Gastrocnemius medialis (tissue), 4 donors: ENCODE measurements at regions of chr4 and their contacts with region 1.

Region 1: GRCh38 chr4:168585168-168586091 is 88.6 kb downstream of the PALLD start:
- DNase-seq: peak; percentile 49 to 83
- ATAC-seq: peak; percentile 87 to 93
- H3K4me3 ChIP-seq: no peak overlapping the region
- H3K27ac ChIP-seq: peak overlapping the region in 1 of 4 donors; percentile 44
- H3K4me1 ChIP-seq: peaks cover 20 to 21% of the 10 kb centered on the region in 2 donors
- H3K27me3 ChIP-seq: no peaks in the 10 kb centered on the region
- CTCF ChIP-seq: peak; percentile 61 to 79 (median 71)
- POLR2A ChIP-seq: no peak

Region 2: GRCh38 chr4:168631241-168632162 is 46.1 kb after region 1 on chr4:
- in situ Hi-C with region 1: no loop called
- intact Hi-C with region 1: loop called (anchors 2 kb)
- DNase-seq: peak; percentile 34 to 69
- ATAC-seq: peak; percentile 75 to 77
- H3K4me3 ChIP-seq: peak overlapping the region; percentile 78 to 86 (median 79)
- H3K27ac ChIP-seq: peak overlapping the region; percentile 77 to 89 (median 82)
- H3K4me1 ChIP-seq: peaks cover 31 to 49% of the 10 kb centered on the region in 2 donors
- H3K27me3 ChIP-seq: no peaks in the 10 kb centered on the region
- CTCF ChIP-seq: peak; percentile 40 to 67 (median 52)
- POLR2A ChIP-seq: peak in 1 of 2 donors; percentile 9

Region 3: GRCh38 chr4:168679397-168680192 is 94.2 kb after region 1 on chr4:
- in situ Hi-C with region 1: no loop called
- intact Hi-C with region 1: no loop called
- DNase-seq: no peak
- ATAC-seq: no peak
- H3K4me3 ChIP-seq: no peak overlapping the region
- H3K27ac ChIP-seq: peak overlapping the region in 3 of 4 donors; percentile 9 to 22 (median 21)
- H3K4me1 ChIP-seq: no peaks in the 10 kb centered on the region
- H3K27me3 ChIP-seq: no peaks in the 10 kb centered on the region
- CTCF ChIP-seq: no peak
- POLR2A ChIP-seq: no peak

Region 4: GRCh38 chr4:168710353-168710946 is 125.0 kb after region 1 on chr4:
- in situ Hi-C with region 1: loop called in 1 of 4 experiments (anchors 10 kb)
- intact Hi-C with region 1: no loop called
- DNase-seq: peak; percentile 17 to 43
- ATAC-seq: peak; percentile 66 to 74
- H3K4me3 ChIP-seq: no peak overlapping the region
- H3K27ac ChIP-seq: peak overlapping the region; percentile 29 to 72 (median 58)
- H3K4me1 ChIP-seq: peaks cover 24 to 26% of the 10 kb centered on the region in 2 donors
- H3K27me3 ChIP-seq: no peaks in the 10 kb centered on the region
- CTCF ChIP-seq: peak; percentile 48 to 75 (median 66)
- POLR2A ChIP-seq: no peak

Region 5: DNA sequence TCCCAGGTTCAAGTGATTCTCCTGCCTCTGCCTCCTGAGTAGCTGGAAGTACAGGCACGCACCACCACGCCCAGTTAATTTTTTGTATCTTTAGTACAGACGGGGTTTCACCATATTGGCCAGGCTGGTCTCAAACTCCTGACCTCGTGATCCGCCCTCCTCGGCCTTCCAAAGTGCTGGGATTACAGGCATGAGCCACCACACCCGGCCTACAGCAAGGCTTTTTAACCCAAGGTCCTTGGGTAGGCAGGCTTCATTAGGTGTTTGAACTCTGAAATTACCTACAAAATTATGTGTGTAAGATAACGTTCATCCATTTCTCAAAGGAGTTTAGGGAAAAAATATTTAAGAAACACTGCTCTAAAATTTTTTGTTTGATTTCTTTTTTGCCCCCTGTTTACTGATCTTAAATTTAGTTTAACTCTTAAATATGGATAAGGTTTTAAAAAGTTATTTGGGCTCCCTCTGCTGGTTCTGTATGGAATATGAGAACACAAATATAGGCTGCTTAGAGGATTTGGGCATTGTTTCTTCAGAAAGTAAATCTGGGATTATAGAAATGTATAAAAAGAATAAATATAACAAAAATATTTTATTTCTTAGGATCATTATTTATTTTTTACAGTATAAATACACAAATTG is 331.8 kb after region 1 on chr4:
- in situ Hi-C with region 1: loop called (anchors 5 to 25 kb)
- intact Hi-C with region 1: loop called (anchors 1 kb)
- DNase-seq: no peak
- ATAC-seq: peak in 1 of 2 donors; percentile 31
- H3K4me3 ChIP-seq: no peak overlapping the region
- H3K27ac ChIP-seq: peak overlapping the region in 3 of 4 donors; percentile 28 to 49 (median 47)
- H3K4me1 ChIP-seq: peaks cover 0 to 6% of the 10 kb centered on the region in 2 donors
- H3K27me3 ChIP-seq: no peaks in the 10 kb centered on the region
- CTCF ChIP-seq: peak; percentile 48 to 82 (median 64)
- POLR2A ChIP-seq: no peak

Region 6: GRCh38 chr4:168923526-168924194 is 338.2 kb after region 1 on chr4:
- in situ Hi-C with region 1: loop called (anchors 5 to 25 kb)
- intact Hi-C with region 1: loop called (anchors 1 kb)
- DNase-seq: peak in 1 of 2 donors; percentile 25
- ATAC-seq: peak; percentile 45 to 78
- H3K4me3 ChIP-seq: no peak overlapping the region
- H3K27ac ChIP-seq: no peak overlapping the region
- H3K4me1 ChIP-seq: peaks cover 0 to 6% of the 10 kb centered on the region in 2 donors
- H3K27me3 ChIP-seq: no peaks in the 10 kb centered on the region
- CTCF ChIP-seq: peak; percentile 71 to 80 (median 73)
- POLR2A ChIP-seq: no peak